ENCODE measurements at regions of chr1 and their contacts with region 1.

Region 1: GRCh38 chr1:77459881-77460280 is 178.1 kb downstream of the AK5 start:
- DNase-seq: no peak
- H3K4me3 ChIP-seq: no peak overlapping the region
- H3K27ac ChIP-seq: no peak overlapping the region
- H3K4me1 ChIP-seq: no peaks in the 10 kb centered on the region
- H3K27me3 ChIP-seq: no peaks in the 10 kb centered on the region
- CTCF ChIP-seq: no peak
- EP300 ChIP-seq: no peak
- POLR2A ChIP-seq: no peak

Region 2: GRCh38 chr1:77322061-77322900 is 137.6 kb before region 1 on chr1:
- intact Hi-C with region 1: loop called in 1 of 4 experiments (anchors 5 kb)
- DNase-seq: no peak
- H3K4me3 ChIP-seq: no peak overlapping the region
- H3K27ac ChIP-seq: no peak overlapping the region
- H3K4me1 ChIP-seq: no peaks in the 10 kb centered on the region
- H3K27me3 ChIP-seq: no peaks in the 10 kb centered on the region
- CTCF ChIP-seq: no peak
- EP300 ChIP-seq: no peak
- POLR2A ChIP-seq: no peak

Region 3: DNA sequence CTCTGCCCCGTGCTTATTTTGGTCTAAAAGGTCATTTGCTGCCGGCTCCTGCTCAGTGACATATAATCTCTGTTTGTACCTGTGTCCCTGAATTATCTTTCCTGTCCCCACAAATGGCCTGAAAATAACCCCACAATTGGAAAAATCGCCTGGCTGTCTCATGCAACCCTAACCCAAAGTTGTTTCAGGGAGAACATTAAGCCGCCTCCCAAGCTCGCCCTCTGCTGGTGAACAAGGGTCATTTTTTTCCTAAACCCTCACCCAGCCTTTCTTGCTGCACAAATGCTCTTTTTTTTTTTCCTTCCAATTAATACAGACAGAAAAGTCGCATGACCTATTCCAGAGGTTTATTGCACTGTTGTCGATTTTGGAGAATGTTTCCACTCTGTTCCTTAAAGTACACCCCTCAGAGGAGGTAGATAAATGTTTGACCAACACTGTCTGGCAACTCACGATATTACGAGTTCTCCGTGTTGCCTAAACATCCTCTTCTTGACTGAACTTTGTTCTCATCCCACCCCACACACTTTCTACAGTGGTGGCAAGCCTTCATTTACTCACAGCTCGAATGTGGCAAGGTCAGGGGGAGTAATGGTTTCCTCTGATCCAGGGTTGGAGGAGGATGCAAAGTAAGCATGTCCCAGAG is 73.9 kb after region 1 on chr1:
- intact Hi-C with region 1: no loop called
- DNase-seq: peak; percentile 31 to 59 (median 56)
- H3K4me3 ChIP-seq: no peak overlapping the region
- H3K27ac ChIP-seq: no peak overlapping the region
- H3K4me1 ChIP-seq: no peaks in the 10 kb centered on the region
- H3K27me3 ChIP-seq: no peaks in the 10 kb centered on the region
- CTCF ChIP-seq: peak; percentile 37 to 58 (median 38)
- EP300 ChIP-seq: no peak
- POLR2A ChIP-seq: no peak

Region 4: DNA sequence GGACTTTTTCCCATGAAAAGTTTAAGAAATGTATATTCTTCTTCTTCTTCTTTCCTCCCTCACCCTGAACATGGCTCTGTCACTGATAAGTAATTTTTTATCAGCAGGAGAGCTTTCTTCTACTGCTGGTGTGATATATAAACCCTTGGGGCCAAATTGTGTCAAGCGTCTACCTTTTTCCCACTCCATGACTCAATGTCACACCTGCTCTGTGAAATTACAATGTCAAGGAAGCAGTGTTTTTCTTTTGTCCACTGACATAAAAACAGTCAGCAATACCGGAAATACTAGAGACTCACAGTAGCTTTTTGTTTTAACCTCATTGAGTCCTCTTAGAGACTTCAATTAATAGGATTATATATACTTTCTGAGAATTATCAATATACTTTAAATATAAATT is 1962.8 kb after region 1 on chr1:
- intact Hi-C with region 1: no loop called
- DNase-seq: no peak
- H3K4me3 ChIP-seq: no peak overlapping the region
- H3K27ac ChIP-seq: no peak overlapping the region
- H3K4me1 ChIP-seq: no peaks in the 10 kb centered on the region
- H3K27me3 ChIP-seq: no peaks in the 10 kb centered on the region
- CTCF ChIP-seq: no peak
- EP300 ChIP-seq: no peak
- POLR2A ChIP-seq: no peak

Measured in ovary (tissue), 10 donors.